ENCODE measurements at regions of chr3 and their contacts with region 1.

Region 1: GRCh38 chr3:190532731-190533203 is 18.9 kb downstream of the IL1RAP start:
- DNase-seq: no peak

Region 2: DNA sequence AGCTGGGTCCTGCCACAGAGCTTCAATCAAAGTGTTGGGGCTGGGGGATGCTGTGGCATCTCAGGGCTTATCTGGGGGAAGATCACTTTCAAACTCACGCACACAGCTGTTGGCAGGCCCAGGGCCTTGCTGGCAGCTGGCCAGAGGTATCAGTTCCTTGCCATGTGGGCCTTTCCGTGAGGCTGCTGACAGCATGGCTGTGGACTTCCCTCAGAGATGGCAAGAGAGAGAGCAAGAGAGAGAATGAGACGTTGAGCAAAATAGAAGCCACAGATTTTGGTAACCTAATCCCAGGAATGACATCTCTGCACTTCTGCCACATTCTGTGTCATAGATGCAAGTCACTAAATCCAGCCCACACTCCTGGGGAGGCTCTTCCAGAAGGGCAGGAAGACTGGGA is 1270.0 kb before region 1 on chr3:
- intact Hi-C with region 1: no loop called
- DNase-seq: no peak

Region 3: GRCh38 chr3:190321789-190322603 is 210.8 kb before region 1 on chr3 and contains the start of gene CLDN1:
- intact Hi-C with region 1: no loop called
- DNase-seq: peak; percentile 94
- total RNA-seq, gene CLDN1: 0.46 to 1.1 TPM

Region 4: GRCh38 chr3:190504354-190505125 is 28.2 kb before region 1 on chr3:
- intact Hi-C with region 1: loop called in 1 of 2 experiments (anchors 1 kb)
- DNase-seq: no peak